ENCODE measurements at regions of chr4 and their contacts with region 1.

Region 1: DNA sequence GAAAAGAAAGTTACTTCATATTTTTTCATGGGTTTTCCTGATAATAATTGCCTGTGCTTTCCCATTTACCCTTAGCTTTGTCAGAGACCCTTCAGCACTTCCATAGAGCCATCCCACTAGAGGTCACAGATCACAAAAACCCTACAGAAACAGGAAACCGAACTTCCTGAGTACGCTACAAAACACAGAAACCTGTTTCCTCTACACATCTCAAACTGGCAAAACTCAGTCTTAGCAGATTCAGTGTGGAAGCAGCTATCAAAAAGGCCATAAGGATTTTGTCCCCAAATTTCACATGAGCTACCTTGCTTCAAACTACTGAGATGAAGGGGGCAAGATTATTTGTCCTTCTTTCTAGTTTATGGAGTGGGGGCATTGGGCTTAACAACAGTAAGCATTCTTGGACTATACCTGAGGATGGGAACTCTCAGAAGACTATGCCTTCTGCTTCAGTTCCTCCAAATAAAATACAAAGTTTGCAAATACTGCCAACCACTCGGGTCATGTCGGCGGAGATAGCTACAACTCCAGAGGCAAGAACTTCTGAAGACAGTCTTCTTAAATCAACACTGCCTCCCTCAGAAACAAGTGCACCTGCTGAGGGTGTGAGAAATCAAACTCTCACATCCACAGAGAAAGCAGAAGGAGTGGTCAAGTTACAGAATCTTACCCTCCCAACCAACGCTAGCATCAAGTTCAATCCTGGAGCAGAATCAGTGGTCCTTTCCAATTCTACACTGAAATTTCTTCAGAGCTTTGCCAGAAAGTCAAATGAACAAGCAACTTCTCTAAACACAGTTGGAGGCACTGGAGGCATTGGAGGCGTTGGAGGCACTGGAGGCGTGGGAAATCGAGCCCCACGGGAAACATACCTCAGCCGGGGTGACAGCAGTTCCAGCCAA is at the start of gene MMRN1:
- DNase-seq: no peak
- ATAC-seq: no peak
- H3K4me3 ChIP-seq: peak within 1 kb of the TSS in 2 of 12 donors; percentile 6 to 7
- H3K27ac ChIP-seq: no peak within 1 kb of the TSS
- H3K4me1 ChIP-seq: peaks cover 0 to 7% (median 0%) of the 10 kb centered on the region in 12 donors
- H3K27me3 ChIP-seq: no peaks in the 10 kb centered on the region
- CTCF ChIP-seq: no peak
- POLR2A ChIP-seq: no peak
- total RNA-seq, gene MMRN1: 0.14 to 9.9 (median 1.5) TPM

Region 2: GRCh38 chr4:89158884-89159503 is 735.9 kb before region 1 on chr4:
- intact Hi-C with region 1: loop called in 5 of 10 experiments (anchors 5 to 10 kb)
- DNase-seq: no peak
- ATAC-seq: peak in 3 of 4 donors; percentile 34 to 55 (median 45)
- H3K4me3 ChIP-seq: no peak overlapping the region
- H3K27ac ChIP-seq: no peak overlapping the region
- H3K4me1 ChIP-seq: peaks cover 0 to 10% (median 0%) of the 10 kb centered on the region in 12 donors
- H3K27me3 ChIP-seq: no peaks in the 10 kb centered on the region
- CTCF ChIP-seq: peak; percentile 59 to 84 (median 74)
- POLR2A ChIP-seq: no peak

Region 3: DNA sequence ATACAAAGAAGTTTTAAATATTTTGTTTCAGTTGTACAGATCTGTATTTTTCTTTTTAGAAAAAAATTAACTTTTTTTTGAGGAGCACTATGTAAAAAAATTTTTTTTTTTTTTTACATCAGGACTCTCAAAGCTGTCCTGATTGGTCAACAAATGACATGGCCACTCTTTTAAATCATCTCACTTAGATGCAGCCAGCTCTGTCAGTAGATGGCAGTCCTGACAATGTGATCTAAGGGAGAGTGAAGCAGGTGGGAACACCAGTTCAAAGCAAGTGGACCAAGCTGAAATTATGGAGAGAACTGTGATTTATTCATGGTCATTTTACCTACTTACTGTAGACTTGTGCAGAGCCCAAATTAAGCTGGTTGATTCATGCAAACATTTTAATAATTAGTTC is 412.7 kb before region 1 on chr4:
- intact Hi-C with region 1: loop called in 6 of 10 experiments (anchors 5 to 10 kb)
- DNase-seq: no peak
- ATAC-seq: peak in 3 of 4 donors; percentile 45 to 70 (median 64)
- H3K4me3 ChIP-seq: no peak overlapping the region
- H3K27ac ChIP-seq: no peak overlapping the region
- H3K4me1 ChIP-seq: no peaks in the 10 kb centered on the region
- H3K27me3 ChIP-seq: no peaks in the 10 kb centered on the region
- CTCF ChIP-seq: peak in 5 of 12 donors; percentile 9 to 33 (median 26)
- POLR2A ChIP-seq: no peak

Region 4: GRCh38 chr4:89640620-89641366 is 254.1 kb before region 1 on chr4:
- intact Hi-C with region 1: loop called in 2 of 10 experiments (anchors 5 kb)
- DNase-seq: peak; percentile 9 to 54 (median 41)
- ATAC-seq: peak in 3 of 4 donors; percentile 69 to 80 (median 75)
- H3K4me3 ChIP-seq: peak overlapping the region in 7 of 12 donors; percentile 11 to 36 (median 25)
- H3K27ac ChIP-seq: no peak overlapping the region
- H3K4me1 ChIP-seq: no peaks in the 10 kb centered on the region
- H3K27me3 ChIP-seq: peaks cover 0 to 4% (median 0%) of the 10 kb centered on the region in 9 donors
- CTCF ChIP-seq: peak in 11 of 12 donors; percentile 31 to 56 (median 44)
- POLR2A ChIP-seq: no peak

Region 5: GRCh38 chr4:90002441-90003077 is 107.7 kb after region 1 on chr4:
- intact Hi-C with region 1: no loop called
- DNase-seq: no peak
- ATAC-seq: no peak
- H3K4me3 ChIP-seq: no peak overlapping the region
- H3K27ac ChIP-seq: no peak overlapping the region
- H3K4me1 ChIP-seq: no peaks in the 10 kb centered on the region
- H3K27me3 ChIP-seq: no peaks in the 10 kb centered on the region
- CTCF ChIP-seq: no peak
- POLR2A ChIP-seq: no peak